ENCODE measurements at regions of chr3 and their contacts with region 1.

Region 1: GRCh38 chr3:131026321-131027178 is at the starts of genes ASTE1 and NEK11:
- DNase-seq: peak; percentile 97
- ATAC-seq: peak; percentile 99
- total RNA-seq, gene ASTE1: 3.4 TPM
- total RNA-seq, gene NEK11: 1.3 TPM

Region 2: GRCh38 chr3:130746246-130747039 is 280.1 kb before region 1 on chr3 and contains the start of gene PIK3R4:
- intact Hi-C with region 1: loop called (anchors 5 kb)
- DNase-seq: peak; percentile 91
- ATAC-seq: peak; percentile 96
- total RNA-seq, gene PIK3R4: 11.4 TPM

Region 3: DNA sequence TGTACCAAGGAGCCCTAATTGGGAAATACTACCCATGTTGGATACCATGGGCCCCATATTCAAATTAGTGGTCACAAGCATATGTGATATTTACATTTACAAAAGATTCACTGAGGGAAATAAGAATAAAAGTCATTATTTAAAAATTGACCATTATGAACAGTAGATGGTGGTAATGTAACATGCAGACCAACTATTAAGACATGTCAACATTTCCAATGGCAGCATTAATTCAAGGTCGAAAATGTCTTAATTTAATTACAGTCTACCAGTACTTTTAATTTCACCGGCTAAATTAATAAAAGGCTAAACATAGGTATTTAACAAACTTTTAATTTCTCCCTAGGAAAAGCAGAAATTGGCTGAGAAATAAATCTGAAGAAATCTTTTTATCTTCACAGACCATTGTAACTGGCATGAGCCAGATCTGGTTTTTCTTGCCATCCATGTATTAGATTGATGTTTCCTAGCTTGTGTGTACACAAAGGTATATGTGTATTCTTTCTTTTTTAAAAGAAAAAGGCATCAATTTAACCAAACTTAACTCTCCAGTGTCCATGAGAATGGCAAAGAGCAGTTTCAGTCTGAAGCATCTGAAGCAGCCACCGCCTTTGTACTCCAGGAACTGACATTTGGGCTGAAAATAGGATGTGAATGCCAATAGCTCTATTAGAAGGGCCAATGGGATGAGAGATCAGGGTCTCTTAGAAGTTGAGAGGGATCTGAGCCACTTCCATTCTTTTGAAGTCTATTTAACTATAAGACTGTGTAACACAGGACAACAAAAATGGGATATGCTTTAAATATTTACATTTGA is 26.7 kb after region 1 on chr3:
- intact Hi-C with region 1: no loop called
- DNase-seq: no peak
- ATAC-seq: no peak

Region 4: GRCh38 chr3:131381444-131382291 is 355.1 kb after region 1 on chr3 and contains the start of gene NUDT16:
- intact Hi-C with region 1: loop called (anchors 10 kb)
- DNase-seq: peak; percentile 100
- ATAC-seq: peak; percentile 99
- total RNA-seq, gene NUDT16: 23.3 TPM

Region 5: DNA sequence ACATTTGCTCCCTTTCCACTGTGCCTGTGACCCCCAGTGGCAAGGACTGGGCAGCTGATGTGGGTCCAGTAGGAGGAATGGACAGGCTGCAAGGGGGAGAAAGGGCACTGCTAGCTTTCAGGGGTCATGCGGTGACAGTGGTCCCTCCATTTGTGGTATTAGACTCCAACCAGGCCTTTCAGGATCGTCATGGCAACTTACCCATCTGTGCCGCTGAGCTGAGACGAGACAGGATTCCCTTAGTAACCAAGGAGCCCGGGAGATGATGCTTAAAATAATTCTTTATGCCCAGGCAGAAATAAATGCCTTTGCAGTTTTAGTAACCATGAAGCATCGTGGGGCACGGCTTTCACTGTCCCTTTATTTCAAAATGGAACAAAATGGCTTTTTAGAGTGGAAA is 492.1 kb after region 1 on chr3:
- intact Hi-C with region 1: no loop called
- DNase-seq: no peak
- ATAC-seq: no peak

Region 6: GRCh38 chr3:131669590-131669989 is 643.0 kb after region 1 on chr3:
- intact Hi-C with region 1: no loop called
- DNase-seq: no peak
- ATAC-seq: no peak